ENCODE measurements at regions of chr1 and their contacts with region 1.

Region 1: DNA sequence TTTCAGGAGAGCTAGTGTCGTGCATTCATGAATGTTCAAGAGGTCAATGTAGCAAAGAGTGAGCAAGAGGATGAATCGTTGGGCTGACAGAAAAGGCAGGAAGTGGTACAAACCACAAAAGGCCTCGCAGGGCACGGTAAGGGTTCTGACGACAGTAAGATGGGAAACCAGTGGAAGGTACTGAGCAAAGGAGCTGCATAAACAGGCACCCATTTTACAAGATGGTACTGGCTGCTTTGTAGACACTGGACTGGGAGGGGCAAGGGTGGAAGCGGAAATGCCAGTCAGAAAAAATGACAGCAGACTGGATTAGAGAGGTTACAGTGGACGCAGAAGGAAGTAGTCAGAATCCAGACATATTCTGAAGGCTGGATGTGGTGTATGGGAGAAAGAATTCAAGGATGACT is 123.5 kb downstream of the PTPN14 start:
- DNase-seq: peak; percentile 66
- ATAC-seq: peak; percentile 100
- H3K4me3 Mint-ChIP-seq: peak overlapping the region; percentile 64
- H3K27ac Mint-ChIP-seq: peak overlapping the region; percentile 91
- H3K4me1 Mint-ChIP-seq: peaks cover 21% of the 10 kb centered on the region
- H3K27me3 Mint-ChIP-seq: no peaks in the 10 kb centered on the region

Region 2: DNA sequence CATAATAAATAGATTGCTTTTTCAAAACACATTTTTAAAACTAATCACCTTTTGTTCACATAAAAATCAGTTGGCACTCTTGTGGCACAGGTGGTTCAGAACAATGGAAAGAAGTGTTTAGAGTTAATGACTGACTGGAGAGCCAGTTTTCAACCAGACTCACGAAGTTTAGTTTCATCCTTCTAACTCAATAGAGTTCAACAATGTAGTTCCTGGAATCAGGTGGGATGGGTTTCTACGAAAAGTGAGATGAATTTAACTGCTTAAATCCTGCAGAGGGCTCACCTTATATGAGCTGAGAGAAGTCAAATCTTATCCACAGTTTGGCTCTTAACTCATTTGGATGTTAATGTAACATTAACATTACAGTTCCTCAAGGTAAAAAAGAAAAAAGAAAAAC is 30.4 kb before region 1 on chr1:
- POLR2A ChIA-PET with region 1: interaction called, 19 read pairs
- DNase-seq: no peak
- ATAC-seq: peak; percentile 78
- H3K4me3 Mint-ChIP-seq: peak overlapping the region; percentile 53
- H3K27ac Mint-ChIP-seq: peak overlapping the region; percentile 66
- H3K4me1 Mint-ChIP-seq: peaks cover 39% of the 10 kb centered on the region
- H3K27me3 Mint-ChIP-seq: peaks cover 2% of the 10 kb centered on the region

Region 3: GRCh38 chr1:214416417-214416816 is 11.5 kb before region 1 on chr1:
- POLR2A ChIA-PET with region 1: interaction called, 22 read pairs
- DNase-seq: no peak
- ATAC-seq: no peak
- H3K4me3 Mint-ChIP-seq: no peak overlapping the region
- H3K27ac Mint-ChIP-seq: no peak overlapping the region
- H3K4me1 Mint-ChIP-seq: peaks cover 31% of the 10 kb centered on the region
- H3K27me3 Mint-ChIP-seq: peaks cover 12% of the 10 kb centered on the region

Region 4: GRCh38 chr1:214438530-214438929 is 10.7 kb after region 1 on chr1:
- POLR2A ChIA-PET with region 1: interaction called, 11 read pairs
- DNase-seq: no peak
- ATAC-seq: no peak
- H3K4me3 Mint-ChIP-seq: no peak overlapping the region
- H3K27ac Mint-ChIP-seq: no peak overlapping the region
- H3K4me1 Mint-ChIP-seq: peaks cover 36% of the 10 kb centered on the region
- H3K27me3 Mint-ChIP-seq: peaks cover 7% of the 10 kb centered on the region

Region 5: DNA sequence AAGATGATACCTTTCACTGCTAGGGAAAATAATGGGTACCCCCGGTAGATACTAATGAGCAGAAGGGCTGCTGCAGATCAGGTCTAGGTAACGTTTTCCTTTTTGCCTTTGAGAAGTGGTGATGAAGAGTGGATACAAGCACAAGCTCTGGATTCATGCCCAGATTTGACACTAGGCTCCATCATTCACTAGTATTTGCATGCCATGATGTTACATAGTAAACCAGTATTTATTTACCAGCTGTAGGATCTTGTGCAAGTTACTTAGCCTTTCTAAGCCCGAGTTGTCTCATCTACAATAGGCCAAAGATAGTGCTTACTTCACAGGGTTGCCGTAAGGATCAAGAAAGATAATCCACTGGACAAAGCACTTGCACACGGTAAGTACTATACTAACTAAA is 109.3 kb after region 1 on chr1:
- POLR2A ChIA-PET with region 1: no interaction called
- DNase-seq: no peak
- ATAC-seq: no peak
- H3K4me3 Mint-ChIP-seq: no peak overlapping the region
- H3K27ac Mint-ChIP-seq: no peak overlapping the region
- H3K4me1 Mint-ChIP-seq: no peaks in the 10 kb centered on the region
- H3K27me3 Mint-ChIP-seq: peaks cover 10% of the 10 kb centered on the region